ENCODE measurements at regions of chr3 and their contacts with region 1.

Region 1: DNA sequence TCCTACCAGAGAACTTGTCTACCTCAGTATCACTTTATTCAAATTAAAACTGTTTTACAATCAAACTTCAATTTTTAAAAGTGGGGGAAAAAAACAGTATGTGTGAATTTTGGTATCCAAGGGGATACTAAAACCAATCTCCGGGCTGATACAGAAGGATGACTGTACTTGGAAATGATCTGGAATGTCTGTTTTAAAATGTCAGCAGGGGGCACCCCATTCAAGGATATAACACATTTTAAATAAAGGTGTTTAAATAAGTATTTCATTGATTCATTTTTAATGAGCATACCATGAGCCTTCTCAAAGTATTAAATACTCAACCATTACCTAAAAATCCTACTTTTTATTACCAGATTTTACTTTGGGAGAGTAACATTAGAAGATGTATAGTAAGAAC is 67.9 kb downstream of the ULK4 start:
- DNase-seq: no peak
- ATAC-seq: no peak
- H3K4me3 Mint-ChIP-seq: no peak overlapping the region
- H3K27ac Mint-ChIP-seq: no peak overlapping the region
- H3K4me1 Mint-ChIP-seq: no peaks in the 10 kb centered on the region
- H3K27me3 Mint-ChIP-seq: no peaks in the 10 kb centered on the region
- CTCF ChIP-seq: no peak

Region 2: GRCh38 chr3:41963823-41964222 is 69.8 kb after region 1 on chr3:
- CTCF ChIA-PET with region 1: no interaction called
- POLR2A ChIA-PET with region 1: no interaction called
- intact Hi-C with region 1: no loop called
- DNase-seq: no peak
- ATAC-seq: no peak
- H3K4me3 Mint-ChIP-seq: no peak overlapping the region
- H3K27ac Mint-ChIP-seq: no peak overlapping the region
- H3K4me1 Mint-ChIP-seq: peaks cover 14% of the 10 kb centered on the region
- H3K27me3 Mint-ChIP-seq: no peaks in the 10 kb centered on the region
- CTCF ChIP-seq: no peak

Region 3: GRCh38 chr3:42118762-42119361 is 224.9 kb after region 1 on chr3:
- CTCF ChIA-PET with region 1: interaction called, 4 read pairs
- POLR2A ChIA-PET with region 1: no interaction called
- intact Hi-C with region 1: loop called (anchors 5 kb)
- DNase-seq: no peak
- ATAC-seq: peak; percentile 82
- H3K4me3 Mint-ChIP-seq: no peak overlapping the region
- H3K27ac Mint-ChIP-seq: peak overlapping the region; percentile 4
- H3K4me1 Mint-ChIP-seq: peaks cover 92% of the 10 kb centered on the region
- H3K27me3 Mint-ChIP-seq: no peaks in the 10 kb centered on the region
- CTCF ChIP-seq: no peak

Region 4: GRCh38 chr3:42179110-42179725 is 285.2 kb after region 1 on chr3:
- CTCF ChIA-PET with region 1: no interaction called
- POLR2A ChIA-PET with region 1: no interaction called
- intact Hi-C with region 1: loop called (anchors 5 kb)
- DNase-seq: no peak
- ATAC-seq: no peak
- H3K4me3 Mint-ChIP-seq: no peak overlapping the region
- H3K27ac Mint-ChIP-seq: peak overlapping the region; percentile 27
- H3K4me1 Mint-ChIP-seq: peaks cover 27% of the 10 kb centered on the region
- H3K27me3 Mint-ChIP-seq: no peaks in the 10 kb centered on the region
- CTCF ChIP-seq: no peak